ENCODE measurements at regions of chr5 and their contacts with region 1.

Region 1: DNA sequence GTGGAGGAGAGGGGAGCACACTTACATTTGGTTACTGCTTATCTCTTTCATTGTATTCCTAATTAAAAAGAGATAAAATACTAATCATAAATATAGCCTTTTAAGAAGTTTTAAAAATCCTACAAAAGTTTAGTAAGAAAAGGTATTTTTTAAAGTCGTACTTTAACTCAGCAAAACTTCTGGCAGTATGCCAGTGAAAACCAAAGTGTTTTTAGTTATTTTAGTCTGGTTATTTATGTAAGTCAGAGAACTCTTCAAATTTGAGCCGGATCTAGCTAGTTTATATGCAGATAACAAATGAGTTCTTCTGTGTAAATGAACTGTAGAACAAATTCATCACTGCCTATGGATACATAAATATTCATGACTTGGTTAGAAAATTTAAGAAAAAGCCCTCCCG is 36.5 kb upstream of the ANKDD1B start:
- DNase-seq: no peak
- ATAC-seq: peak in 1 of 4 donors; percentile 11
- H3K4me3 ChIP-seq: no peak overlapping the region
- H3K27ac ChIP-seq: peak overlapping the region in 8 of 12 donors; percentile 7 to 65 (median 20)
- H3K4me1 ChIP-seq: peaks cover 0 to 44% (median 19%) of the 10 kb centered on the region in 12 donors
- H3K27me3 ChIP-seq: no peaks in the 10 kb centered on the region
- CTCF ChIP-seq: no peak
- POLR2A ChIP-seq: no peak

Region 2: DNA sequence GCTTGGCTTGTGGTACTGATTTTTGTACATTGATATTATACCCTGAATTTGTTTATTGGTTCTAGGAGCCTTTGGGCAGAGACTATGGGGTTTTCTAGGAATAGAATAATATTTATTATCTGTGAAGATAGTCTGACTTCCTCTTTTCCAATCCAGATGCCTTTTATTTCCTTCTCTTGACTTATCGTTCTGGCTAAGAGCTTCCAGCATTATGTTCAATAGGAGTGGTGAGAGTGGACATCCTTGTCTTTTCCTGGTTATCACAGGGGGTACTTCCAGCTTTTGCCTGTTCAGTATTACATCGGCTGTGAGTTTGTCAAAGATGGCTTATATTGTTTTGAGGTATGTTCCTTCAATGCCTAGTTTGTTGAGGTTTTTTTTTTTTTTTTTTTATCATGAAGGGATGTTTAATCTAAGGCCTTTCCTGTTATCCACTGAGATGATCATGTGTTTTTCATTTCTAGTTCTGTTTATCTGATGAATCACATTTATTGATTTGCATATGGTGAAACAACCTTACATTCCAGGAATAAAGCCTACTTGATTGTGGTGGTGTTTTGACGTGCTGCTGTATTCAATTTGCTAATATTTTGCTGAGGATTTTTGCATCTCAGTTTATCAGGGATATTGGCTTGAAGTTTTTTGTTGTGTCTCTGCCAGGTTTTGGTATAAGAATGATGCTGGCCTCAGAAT is 140.8 kb before region 1 on chr5:
- intact Hi-C with region 1: loop called in 1 of 10 experiments (anchors 10 kb)
- DNase-seq: no peak
- ATAC-seq: no peak
- H3K4me3 ChIP-seq: no peak overlapping the region
- H3K27ac ChIP-seq: no peak overlapping the region
- H3K4me1 ChIP-seq: peaks cover 0 to 6% (median 0%) of the 10 kb centered on the region in 12 donors
- H3K27me3 ChIP-seq: no peaks in the 10 kb centered on the region
- CTCF ChIP-seq: no peak
- POLR2A ChIP-seq: no peak